PC-3 (cell line): ENCODE measurements at regions of chr1 and their contacts with region 1.

Region 1: GRCh38 chr1:113759333-113760101 is at the start of gene PHTF1:
- DNase-seq: peak; percentile 78
- ATAC-seq: peak; percentile 84
- H3K4me3 ChIP-seq: peak within 1 kb of the TSS; percentile 91
- H3K27ac ChIP-seq: peak within 1 kb of the TSS; percentile 80
- H3K4me1 ChIP-seq: peaks cover 5% of the 10 kb centered on the region; the same call in 1 of the 2 replicates
- H3K27me3 ChIP-seq: no peaks in the 10 kb centered on the region
- CTCF ChIP-seq: no peak
- total RNA-seq, gene PHTF1: 23.4 and 27.3 TPM in 2 replicates

Region 2: DNA sequence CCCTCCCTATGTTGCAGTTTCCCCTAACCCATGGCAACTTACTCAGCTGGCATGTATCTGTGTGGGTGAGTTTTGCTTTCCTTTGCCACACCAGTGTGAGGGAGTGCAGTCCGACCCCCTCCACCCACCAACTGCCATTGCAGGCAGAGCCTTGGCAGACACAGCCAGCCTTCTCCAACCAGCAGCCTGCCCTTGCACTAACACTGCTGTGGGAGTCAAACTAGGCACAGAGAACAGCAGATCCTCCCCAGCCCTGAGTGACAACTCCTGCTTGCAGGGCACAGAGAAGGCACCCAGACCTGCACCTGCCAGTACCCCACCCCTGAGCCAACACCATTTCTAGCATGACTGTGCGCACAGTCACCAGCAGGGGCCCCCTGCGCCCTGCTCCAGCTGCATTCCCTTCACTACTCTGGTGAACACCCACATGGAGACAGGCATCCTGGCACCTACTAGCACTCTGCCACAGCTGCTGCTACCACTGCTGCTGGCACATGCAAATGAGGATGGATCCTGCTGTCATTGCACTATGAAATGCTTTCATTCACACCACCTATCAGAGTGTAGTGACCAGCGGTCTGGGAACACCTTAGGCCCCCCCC is 270.8 kb before region 1 on chr1:
- CTCF ChIA-PET with region 1: no interaction called
- POLR2A ChIA-PET with region 1: no interaction called
- intact Hi-C with region 1: no loop called
- DNase-seq: peak; percentile 19
- ATAC-seq: peak; percentile 53; the same call in 1 of the 2 replicates
- H3K4me3 ChIP-seq: no peak overlapping the region
- H3K27ac ChIP-seq: no peak overlapping the region
- H3K4me1 ChIP-seq: no peaks in the 10 kb centered on the region
- H3K27me3 ChIP-seq: no peaks in the 10 kb centered on the region
- CTCF ChIP-seq: peak; percentile 48

Region 3: GRCh38 chr1:113542221-113542701 is 217.3 kb before region 1 on chr1:
- CTCF ChIA-PET with region 1: no interaction called
- POLR2A ChIA-PET with region 1: no interaction called
- intact Hi-C with region 1: no loop called
- DNase-seq: peak; percentile 71
- ATAC-seq: peak; percentile 98
- H3K4me3 ChIP-seq: no peak overlapping the region
- H3K27ac ChIP-seq: peak overlapping the region; percentile 19
- H3K4me1 ChIP-seq: peaks cover 24% of the 10 kb centered on the region
- H3K27me3 ChIP-seq: no peaks in the 10 kb centered on the region
- CTCF ChIP-seq: no peak

Region 4: DNA sequence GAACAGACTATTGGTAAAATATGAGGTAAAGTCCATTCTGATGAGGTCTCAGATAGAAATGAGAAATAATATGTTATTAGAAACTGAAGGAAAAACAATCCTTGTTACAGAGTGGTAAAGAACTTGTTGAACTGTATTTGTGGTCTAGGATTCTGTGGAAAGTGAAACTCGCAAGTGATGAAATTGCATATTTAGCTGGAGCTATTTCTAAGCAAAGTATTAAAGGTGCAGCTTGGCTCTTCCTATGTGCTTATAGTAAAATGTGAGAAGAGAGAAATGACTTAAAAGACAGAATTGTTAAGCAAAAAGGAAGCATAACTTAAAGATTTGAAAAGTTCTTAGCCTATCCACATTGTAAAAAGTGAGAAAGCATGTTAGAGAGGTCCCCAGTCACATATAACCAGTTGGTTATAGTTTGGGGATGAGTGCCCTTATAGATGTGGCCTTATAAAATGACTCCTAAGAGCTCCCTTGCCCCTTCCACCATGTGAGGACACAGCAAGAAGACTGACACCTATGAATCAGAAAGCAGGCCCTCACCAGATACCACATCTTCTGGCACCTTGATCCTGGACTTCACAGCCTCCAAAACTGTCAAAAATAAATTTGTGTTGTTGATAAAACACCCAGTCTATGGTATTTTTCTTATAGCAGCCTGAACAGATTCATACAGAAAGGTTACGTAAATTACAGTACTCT is 25.0 kb before region 1 on chr1:
- CTCF ChIA-PET with region 1: no interaction called
- POLR2A ChIA-PET with region 1: no interaction called
- intact Hi-C with region 1: no loop called
- DNase-seq: no peak
- ATAC-seq: no peak
- H3K4me3 ChIP-seq: no peak overlapping the region
- H3K27ac ChIP-seq: no peak overlapping the region
- H3K4me1 ChIP-seq: no peaks in the 10 kb centered on the region
- H3K27me3 ChIP-seq: no peaks in the 10 kb centered on the region
- CTCF ChIP-seq: no peak

Region 5: DNA sequence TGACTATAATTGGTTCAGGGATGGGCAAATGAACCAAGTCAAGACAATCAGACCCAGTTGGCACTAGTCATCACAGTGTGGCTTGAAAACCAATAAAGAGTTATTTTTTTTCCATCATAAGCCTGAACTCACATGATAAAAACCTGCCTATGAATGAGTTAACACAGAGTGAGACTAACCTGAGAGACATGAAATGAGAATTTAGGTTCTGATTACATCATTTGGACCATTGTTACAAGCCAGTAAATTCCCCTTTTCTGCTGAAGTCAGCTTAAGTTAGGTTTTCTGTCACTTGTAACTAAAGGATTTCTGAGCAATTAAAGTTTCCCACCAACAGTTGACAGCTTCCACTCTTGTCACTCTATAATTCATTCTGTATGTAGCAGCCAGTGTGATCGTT is 62.4 kb after region 1 on chr1:
- CTCF ChIA-PET with region 1: no interaction called
- POLR2A ChIA-PET with region 1: no interaction called
- intact Hi-C with region 1: no loop called
- DNase-seq: no peak
- ATAC-seq: no peak
- H3K4me3 ChIP-seq: no peak overlapping the region
- H3K27ac ChIP-seq: no peak overlapping the region
- H3K4me1 ChIP-seq: no peaks in the 10 kb centered on the region
- H3K27me3 ChIP-seq: no peaks in the 10 kb centered on the region
- CTCF ChIP-seq: no peak

Region 6: DNA sequence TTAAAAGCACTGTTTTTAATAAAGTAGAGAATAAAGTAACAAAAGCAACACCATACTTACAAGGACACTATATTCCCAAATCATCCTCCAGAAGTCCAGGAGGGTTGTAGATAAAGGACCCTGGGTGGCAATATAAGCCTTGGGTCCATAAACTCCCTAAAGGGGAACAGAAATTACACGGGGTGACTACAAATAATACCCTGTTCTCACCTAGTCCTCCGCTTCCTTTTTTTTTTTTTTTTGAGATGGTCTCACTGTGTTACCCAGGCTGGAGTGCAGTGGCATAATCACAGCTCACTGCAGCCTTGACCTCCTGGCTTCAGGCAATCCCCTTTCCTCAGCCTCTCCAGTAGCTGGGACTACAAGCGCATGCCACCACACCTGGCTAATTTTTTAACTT is 98.9 kb after region 1 on chr1:
- CTCF ChIA-PET with region 1: no interaction called
- POLR2A ChIA-PET with region 1: interaction called, 12 read pairs
- intact Hi-C with region 1: no loop called
- DNase-seq: no peak
- ATAC-seq: no peak
- H3K4me3 ChIP-seq: no peak overlapping the region
- H3K27ac ChIP-seq: no peak overlapping the region
- H3K4me1 ChIP-seq: peaks cover 13% of the 10 kb centered on the region
- H3K27me3 ChIP-seq: no peaks in the 10 kb centered on the region
- CTCF ChIP-seq: no peak